Cardiac septum (tissue), 1 donor: ENCODE measurements at regions of chr11 and their contacts with region 1.

Region 1: GRCh38 chr11:130420478-130421198 is 7.8 kb downstream of the ADAMTS8 start:
- DNase-seq: no peak

Region 2: GRCh38 chr11:130323452-130324450 is 96.9 kb before region 1 on chr11:
- intact Hi-C with region 1: loop called (anchors 5 kb)
- DNase-seq: no peak